A549 (cell line): ENCODE measurements at regions of chr16 and their contacts with region 1.

Region 1: DNA sequence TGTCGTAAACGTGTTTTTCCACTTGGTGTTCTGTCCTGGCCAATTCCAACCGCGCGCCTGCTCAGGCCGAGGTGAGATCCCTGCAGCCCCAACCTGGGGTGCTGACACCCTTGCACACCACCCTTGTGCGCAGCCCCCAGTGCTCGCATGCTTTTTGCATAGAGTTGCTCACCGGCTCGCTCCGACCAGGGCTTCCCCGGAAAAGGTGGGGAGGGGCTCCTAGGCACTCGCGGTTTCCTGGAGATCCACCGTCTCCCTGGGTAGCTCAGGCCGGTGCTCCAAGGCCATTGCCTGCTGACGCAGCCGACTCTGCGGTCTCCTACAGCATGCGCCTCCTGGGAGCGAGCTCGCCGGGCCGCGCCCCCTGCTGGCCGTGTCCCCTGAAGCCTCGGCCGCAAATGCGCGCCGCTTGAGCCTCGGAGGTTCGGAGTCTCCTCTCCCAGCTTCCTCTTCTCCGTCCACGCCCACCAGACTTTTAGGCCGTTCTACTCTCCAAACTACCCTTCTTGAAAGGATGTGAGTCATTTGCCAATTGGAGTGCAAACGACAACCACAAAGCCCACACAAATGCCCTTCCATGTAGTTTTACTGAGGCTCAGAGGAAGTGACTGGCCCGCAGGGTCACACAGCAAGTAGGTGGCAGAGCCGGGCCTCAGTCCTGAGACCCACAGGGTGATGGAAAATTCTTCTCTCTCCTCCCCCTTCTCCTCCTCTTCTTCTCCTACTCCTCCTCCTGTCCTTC is 7.2 kb upstream of the PDP2 start:
- DNase-seq: peak; percentile 89 to 92
- ATAC-seq: peak; percentile 94 to 98
- H3K4me3 ChIP-seq: peak overlapping the region; percentile 37
- H3K27ac ChIP-seq: peak overlapping the region; percentile 79 to 82
- H3K4me1 ChIP-seq: peaks cover 5% of the 10 kb centered on the region; the same call in 2 of the 3 replicates
- CTCF ChIP-seq: peak; percentile 93
- EP300 ChIP-seq: no peak
- POLR2A ChIP-seq: peak; percentile 56
- RAD21 ChIP-seq: peak; percentile 46 to 61

Region 2: GRCh38 chr16:66650707-66651473 is 222.2 kb before region 1 on chr16:
- CTCF ChIA-PET with region 1: interaction called, 31 read pairs
- POLR2A ChIA-PET with region 1: no interaction called
- DNase-seq: peak; percentile 79 to 84
- ATAC-seq: peak; percentile 97 to 99
- H3K4me3 ChIP-seq: peak overlapping the region; percentile 43
- H3K27ac ChIP-seq: peak overlapping the region; percentile 56 to 61; a peak in 4 of 6 replicates
- H3K4me1 ChIP-seq: peaks cover 8% of the 10 kb centered on the region; the same call in 2 of the 3 replicates
- CTCF ChIP-seq: peak; percentile 86
- EP300 ChIP-seq: no peak
- POLR2A ChIP-seq: no peak
- RAD21 ChIP-seq: peak; percentile 44 to 61; a peak in 2 of 5 replicates

Region 3: DNA sequence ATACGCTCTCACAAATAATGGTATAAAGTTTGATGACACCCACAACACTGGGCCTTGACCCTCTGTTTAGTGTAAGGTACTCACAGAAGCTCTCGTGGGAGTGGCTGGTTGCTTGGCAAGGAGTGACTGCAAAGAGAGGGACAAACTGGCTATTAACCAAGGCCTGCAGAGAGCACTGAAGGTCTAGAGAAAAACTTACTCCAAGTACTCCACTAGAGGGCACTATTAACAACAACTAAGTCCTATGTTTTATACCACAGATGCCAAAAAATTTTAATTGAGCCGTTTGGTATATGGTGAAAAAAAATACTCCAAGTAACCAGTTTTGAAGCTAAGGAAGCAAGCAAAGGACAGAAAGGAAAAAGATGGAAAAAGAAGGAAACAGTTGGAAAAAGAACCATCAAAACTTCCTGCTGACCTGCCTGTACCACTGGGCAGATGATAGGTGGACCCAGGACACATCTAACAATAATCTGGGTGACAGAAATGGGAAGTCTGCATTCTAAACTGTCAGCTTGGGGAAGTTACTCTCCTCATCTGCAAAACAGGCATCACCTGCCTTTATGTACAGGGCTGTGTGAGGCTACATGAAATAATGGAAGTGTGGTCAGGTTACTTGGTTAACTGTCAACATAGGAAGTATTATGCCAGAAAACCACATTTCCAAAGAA is 144.9 kb before region 1 on chr16:
- CTCF ChIA-PET with region 1: interaction called, 59 read pairs
- POLR2A ChIA-PET with region 1: interaction called, 5 read pairs
- DNase-seq: peak; percentile 61 to 66
- ATAC-seq: peak; percentile 90 to 94
- H3K4me3 ChIP-seq: no peak overlapping the region
- H3K27ac ChIP-seq: no peak overlapping the region
- H3K4me1 ChIP-seq: no peaks in the 10 kb centered on the region
- CTCF ChIP-seq: peak; percentile 80
- EP300 ChIP-seq: no peak
- POLR2A ChIP-seq: no peak
- RAD21 ChIP-seq: peak; percentile 37 to 52; a peak in 3 of 5 replicates

Region 4: GRCh38 chr16:66824006-66824405 is 49.1 kb before region 1 on chr16:
- CTCF ChIA-PET with region 1: interaction called, 148 read pairs
- POLR2A ChIA-PET with region 1: no interaction called
- DNase-seq: no peak
- ATAC-seq: no peak
- H3K4me3 ChIP-seq: no peak overlapping the region
- H3K27ac ChIP-seq: no peak overlapping the region
- H3K4me1 ChIP-seq: peaks cover 8% of the 10 kb centered on the region; the same call in 1 of the 3 replicates
- CTCF ChIP-seq: no peak
- EP300 ChIP-seq: no peak
- POLR2A ChIP-seq: no peak
- RAD21 ChIP-seq: no peak

Region 5: DNA sequence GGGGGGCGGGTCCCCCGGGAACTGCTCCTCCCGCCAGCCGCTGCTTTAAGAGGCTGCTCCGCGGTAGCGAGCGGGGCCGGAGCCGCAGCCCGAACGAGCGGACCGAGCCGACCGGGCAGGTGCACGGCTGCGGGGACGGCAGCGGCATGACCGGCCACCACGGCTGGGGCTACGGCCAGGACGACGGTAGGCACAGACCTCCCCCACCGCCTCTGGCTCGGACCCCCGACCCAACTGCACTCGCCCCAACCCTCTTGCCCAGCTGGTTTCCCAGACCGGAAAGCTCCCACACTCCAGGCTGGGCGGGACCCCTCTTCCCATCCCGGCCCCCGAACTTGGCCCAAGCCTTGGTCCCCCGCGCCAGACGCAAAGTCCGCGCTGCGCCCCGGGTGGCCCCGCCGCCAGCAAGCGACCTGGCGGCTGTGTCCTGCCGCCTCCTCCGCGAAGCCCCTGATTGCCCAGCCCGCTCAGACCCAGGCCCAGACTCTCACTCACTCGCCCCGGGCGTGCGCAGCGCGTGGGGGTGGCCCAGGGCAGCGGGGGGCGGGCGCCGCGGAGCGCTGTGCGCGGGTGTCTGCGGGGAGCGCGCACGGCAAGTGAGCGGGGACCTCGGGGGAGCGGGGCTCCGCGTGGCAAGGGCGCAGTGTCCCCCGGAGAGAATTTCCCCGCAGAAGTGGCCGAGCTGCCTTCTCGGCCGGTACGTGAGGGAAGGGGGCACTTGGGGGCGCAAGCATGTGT is 28.6 kb before region 1 on chr16 and contains the start of gene CA7:
- CTCF ChIA-PET with region 1: interaction called, 65 read pairs
- POLR2A ChIA-PET with region 1: no interaction called
- DNase-seq: no peak
- ATAC-seq: peak in 1 of 2 experiments; percentile 20; a peak in 2 of 6 replicates
- H3K4me3 ChIP-seq: peak within 1 kb of the TSS; percentile 37
- H3K27ac ChIP-seq: peak within 1 kb of the TSS in 1 of 2 experiments; percentile 49; a peak in 3 of 6 replicates
- H3K4me1 ChIP-seq: peaks cover 3% of the 10 kb centered on the region; the same call in 1 of the 3 replicates
- CTCF ChIP-seq: no peak
- EP300 ChIP-seq: no peak
- POLR2A ChIP-seq: no peak
- RAD21 ChIP-seq: no peak
- polyA plus RNA-seq, gene CA7: not detected in 2 replicates

Region 6: GRCh38 chr16:66894948-66895688 is 22.0 kb after region 1 on chr16:
- CTCF ChIA-PET with region 1: interaction called, 10 read pairs
- POLR2A ChIA-PET with region 1: interaction called, 5 read pairs
- DNase-seq: peak; percentile 58 to 78
- ATAC-seq: peak; percentile 89 to 96
- H3K4me3 ChIP-seq: no peak overlapping the region
- H3K27ac ChIP-seq: peak overlapping the region in 1 of 2 experiments; percentile 17; a peak in 3 of 6 replicates
- H3K4me1 ChIP-seq: peaks cover 14% of the 10 kb centered on the region
- CTCF ChIP-seq: peak; percentile 87
- EP300 ChIP-seq: no peak
- POLR2A ChIP-seq: no peak
- RAD21 ChIP-seq: peak; percentile 92 to 98

Region 7: DNA sequence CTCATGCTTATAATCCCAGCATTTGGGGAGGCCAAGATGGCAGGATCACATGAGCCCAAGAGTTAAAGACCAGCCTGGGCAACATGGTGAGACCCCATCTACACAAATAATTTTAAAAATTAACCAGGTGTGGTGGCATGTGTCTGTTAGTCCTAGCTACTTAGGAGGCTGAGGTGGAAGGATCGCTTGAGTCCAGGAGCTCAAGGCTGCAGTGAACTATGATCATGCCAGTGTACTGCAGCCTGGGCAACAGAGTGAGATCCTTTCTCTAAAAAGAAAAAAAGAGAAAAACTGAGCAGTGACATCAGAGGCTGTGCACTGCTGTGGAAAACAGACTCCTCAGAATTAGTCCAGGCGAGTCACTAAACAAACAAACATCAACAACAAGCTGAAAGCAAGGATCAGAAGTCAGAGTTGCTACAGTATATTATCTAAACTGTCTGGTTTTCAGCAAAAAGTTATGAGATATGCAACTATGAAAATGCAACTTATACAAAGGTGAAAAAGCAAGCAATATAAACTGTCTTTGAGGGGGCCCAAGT is 195.2 kb after region 1 on chr16:
- CTCF ChIA-PET with region 1: no interaction called
- POLR2A ChIA-PET with region 1: no interaction called
- DNase-seq: peak in 1 of 2 experiments; percentile 10
- ATAC-seq: peak in 1 of 2 experiments; percentile 35; a peak in 1 of 6 replicates
- H3K4me3 ChIP-seq: no peak overlapping the region
- H3K27ac ChIP-seq: no peak overlapping the region
- H3K4me1 ChIP-seq: 0 out of 3 replicates have a peak, but pooled peaks cover 9% of the 10 kb centered on the region
- CTCF ChIP-seq: no peak
- EP300 ChIP-seq: no peak
- POLR2A ChIP-seq: no peak
- RAD21 ChIP-seq: no peak